GM23248 (cell line): ENCODE measurements at regions of chr21 and their contacts with region 1.

Region 1: DNA sequence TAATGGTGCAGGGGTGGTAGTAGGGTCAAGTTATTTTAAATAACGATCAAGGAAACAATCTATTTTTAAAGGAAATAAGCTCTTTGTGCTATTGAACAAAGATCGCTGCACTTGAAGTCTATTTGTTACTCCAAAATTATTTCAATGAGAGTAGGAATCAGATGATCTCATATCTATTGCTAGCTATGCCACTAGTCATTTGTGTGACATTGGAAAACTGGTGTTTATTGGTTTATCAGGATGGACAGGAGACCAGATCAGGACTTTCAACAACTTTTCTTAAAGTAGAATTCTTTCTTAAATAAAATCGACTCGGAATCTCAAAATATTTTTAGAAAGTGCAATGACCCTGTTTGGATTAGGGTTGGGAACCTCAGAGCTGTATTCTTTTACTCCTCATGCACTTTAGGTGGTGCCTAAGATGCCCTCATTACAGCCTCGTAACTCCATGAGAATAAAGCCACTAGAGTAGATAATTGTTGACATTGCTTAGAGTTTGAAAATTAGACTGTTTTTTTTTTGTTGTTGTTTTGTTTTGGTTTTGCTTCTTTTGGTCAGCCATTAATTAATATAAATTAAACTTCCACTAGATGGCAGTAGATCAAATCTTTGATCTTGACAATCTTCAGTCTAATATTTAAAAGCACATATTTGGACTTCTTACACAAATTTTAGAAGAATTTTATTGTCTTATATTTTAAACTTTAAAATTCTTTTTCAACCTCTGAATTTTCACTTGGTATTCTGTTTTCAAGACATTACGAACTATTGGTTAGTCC is 352.4 kb downstream of the USP25 start:
- DNase-seq: peak; percentile 72
- H3K4me3 ChIP-seq: peak overlapping the region; percentile 52
- H3K27ac ChIP-seq: no peak overlapping the region
- H3K4me1 ChIP-seq: peaks cover 46% of the 10 kb centered on the region
- H3K27me3 ChIP-seq: no peaks in the 10 kb centered on the region

Region 2: DNA sequence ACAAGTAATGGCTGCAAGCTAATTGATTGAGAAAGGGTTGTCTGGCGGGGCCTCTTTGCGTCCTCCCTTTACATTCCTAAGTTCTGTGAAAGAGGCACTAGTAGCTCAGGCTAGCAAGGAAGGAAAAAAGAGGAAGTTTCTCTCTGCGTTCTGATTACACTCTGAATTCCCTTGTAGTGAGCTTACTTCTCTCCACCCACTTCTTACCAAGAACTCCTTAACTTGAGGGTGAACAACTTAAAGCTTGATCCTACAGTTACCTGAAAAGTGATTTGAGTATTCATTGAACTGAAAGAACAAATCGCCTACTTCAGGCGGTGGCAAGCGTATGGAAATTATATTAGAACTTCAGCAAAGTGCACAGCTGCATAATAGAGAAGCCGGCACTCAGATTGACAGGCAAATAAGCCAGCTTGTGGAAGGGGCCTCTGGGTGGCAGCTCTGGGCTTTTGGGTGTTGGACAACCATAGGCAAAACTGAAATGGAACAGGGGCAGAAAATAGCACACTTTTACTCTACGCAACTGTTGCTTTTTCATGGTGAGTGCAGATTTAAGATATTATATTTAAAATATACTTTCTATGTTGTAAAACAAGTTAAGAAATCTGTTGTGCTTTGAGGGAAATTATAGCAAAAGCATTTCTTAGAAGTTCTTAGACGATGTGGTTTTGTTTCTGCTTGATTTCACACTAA is 112.0 kb after region 1 on chr21:
- in situ Hi-C with region 1: loop called (anchors 10 kb)
- DNase-seq: peak; percentile 86
- H3K4me3 ChIP-seq: peak overlapping the region; percentile 82
- H3K27ac ChIP-seq: peak overlapping the region; percentile 92
- H3K4me1 ChIP-seq: peaks cover 24% of the 10 kb centered on the region
- H3K27me3 ChIP-seq: no peaks in the 10 kb centered on the region

Region 3: DNA sequence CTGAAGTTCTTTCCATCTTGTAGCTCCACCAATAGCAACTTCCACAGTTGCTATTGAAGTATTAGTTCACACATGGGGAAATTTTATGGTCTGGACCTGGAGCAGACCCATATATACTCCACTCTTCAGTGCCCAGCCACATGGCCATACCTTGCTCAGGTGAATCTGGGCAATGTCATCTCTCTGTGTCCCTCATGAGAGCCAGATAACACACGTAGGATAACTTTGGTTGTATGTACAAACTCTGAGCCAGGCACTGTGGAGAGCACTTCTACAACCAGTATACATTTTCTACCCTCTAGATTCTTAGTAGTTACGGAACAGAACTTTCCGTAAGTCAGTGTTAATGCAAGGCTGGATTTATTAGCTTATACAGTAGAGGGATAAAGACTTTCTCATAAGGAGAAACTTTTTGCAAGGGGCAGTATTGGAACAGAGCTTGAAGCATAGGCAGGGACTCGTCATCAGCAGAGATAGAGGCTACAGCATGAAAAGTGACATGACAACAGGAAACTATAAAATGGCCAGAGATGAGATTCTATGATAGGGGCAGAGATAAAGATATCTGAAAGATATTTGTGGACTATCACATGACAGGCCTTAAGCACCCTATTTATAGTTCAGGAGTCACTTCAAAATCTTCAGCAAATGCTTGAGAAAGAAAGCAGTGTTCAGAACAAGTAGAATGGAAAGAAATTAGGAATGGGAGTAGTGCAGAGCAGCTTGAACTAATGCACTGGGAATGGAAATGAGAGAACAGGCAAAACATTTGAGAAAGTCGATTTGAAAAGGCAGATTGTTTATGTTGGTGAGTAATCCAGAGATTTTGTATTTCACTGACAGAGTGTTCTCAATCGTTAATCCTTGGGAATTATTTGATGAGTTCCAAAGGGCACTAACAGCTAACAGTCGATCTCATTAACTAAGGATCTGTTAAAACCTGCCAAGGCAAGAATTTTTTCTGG is 129.4 kb after region 1 on chr21:
- in situ Hi-C with region 1: no loop called
- DNase-seq: peak; percentile 21
- H3K4me3 ChIP-seq: peak overlapping the region; percentile 44
- H3K27ac ChIP-seq: peak overlapping the region; percentile 13
- H3K4me1 ChIP-seq: peaks cover 10% of the 10 kb centered on the region; the same call in 1 of the 2 replicates
- H3K27me3 ChIP-seq: no peaks in the 10 kb centered on the region

Region 4: GRCh38 chr21:16241479-16241963 is 159.3 kb after region 1 on chr21:
- in situ Hi-C with region 1: no loop called
- DNase-seq: no peak
- H3K4me3 ChIP-seq: no peak overlapping the region
- H3K27ac ChIP-seq: no peak overlapping the region
- H3K4me1 ChIP-seq: no peaks in the 10 kb centered on the region
- H3K27me3 ChIP-seq: no peaks in the 10 kb centered on the region

Region 5: GRCh38 chr21:16323596-16323995 is 241.4 kb after region 1 on chr21:
- in situ Hi-C with region 1: loop called (anchors 10 kb)
- DNase-seq: peak; percentile 49
- H3K4me3 ChIP-seq: 0 out of 2 replicates have a peak overlapping the region, but pooled peaks have one; percentile 3
- H3K27ac ChIP-seq: no peak overlapping the region
- H3K4me1 ChIP-seq: peaks cover 28% of the 10 kb centered on the region
- H3K27me3 ChIP-seq: no peaks in the 10 kb centered on the region

Region 6: DNA sequence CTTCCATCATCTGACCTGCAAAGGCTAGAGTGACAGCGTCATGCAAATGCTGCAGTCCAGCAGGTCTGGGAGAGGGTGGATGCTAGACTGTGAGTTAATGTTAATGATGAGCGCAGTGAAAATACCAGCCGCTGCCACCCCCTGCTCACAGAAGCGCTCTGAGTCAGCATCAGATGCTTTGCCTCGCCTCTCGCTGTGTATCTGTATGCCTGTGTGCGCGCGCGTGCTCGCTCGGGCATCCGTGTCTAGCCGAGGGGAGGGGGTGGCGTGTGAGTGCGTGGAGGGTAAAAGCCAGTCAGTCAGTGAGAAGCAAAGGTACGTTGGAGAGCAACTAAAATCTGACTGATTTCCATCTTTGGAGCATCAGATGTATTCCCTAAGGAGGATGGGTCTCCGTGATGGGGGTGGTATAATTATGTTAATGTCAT is 506.2 kb after region 1 on chr21:
- in situ Hi-C with region 1: loop called (anchors 25 kb)
- DNase-seq: peak; percentile 96
- H3K4me3 ChIP-seq: peak overlapping the region; percentile 80
- H3K27ac ChIP-seq: peak overlapping the region; percentile 85
- H3K4me1 ChIP-seq: peaks cover 34% of the 10 kb centered on the region
- H3K27me3 ChIP-seq: no peaks in the 10 kb centered on the region

Region 7: DNA sequence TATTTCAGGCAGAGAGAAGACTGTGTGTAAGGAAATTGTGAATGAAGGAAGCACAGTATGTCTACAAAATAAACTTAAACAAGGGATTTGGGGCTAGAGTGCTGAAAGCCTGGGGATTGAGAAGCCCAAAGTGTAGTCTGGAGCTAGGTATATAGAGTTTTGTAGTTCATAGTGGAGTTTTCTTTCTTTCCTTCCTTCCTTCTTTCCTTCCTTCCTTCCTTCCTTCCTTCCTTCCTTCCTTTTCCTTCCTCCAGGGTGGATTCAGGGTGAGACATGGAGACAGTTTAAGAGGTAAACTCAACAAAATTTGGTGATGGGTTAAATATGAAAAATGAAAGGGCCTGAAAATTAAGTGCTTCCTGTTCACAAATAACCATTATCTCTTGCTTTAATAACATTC is 672.8 kb after region 1 on chr21:
- in situ Hi-C with region 1: no loop called
- DNase-seq: no peak
- H3K4me3 ChIP-seq: no peak overlapping the region
- H3K27ac ChIP-seq: no peak overlapping the region
- H3K4me1 ChIP-seq: no peaks in the 10 kb centered on the region
- H3K27me3 ChIP-seq: no peaks in the 10 kb centered on the region